ENCODE measurements at regions of chr19 and their contacts with region 1.

Region 1: GRCh38 chr19:10416380-10417257 is 3.7 kb upstream of the PDE4A start:
- DNase-seq: peak; percentile 69 to 95
- ATAC-seq: peak; percentile 54 to 67
- H3K4me3 ChIP-seq: peak overlapping the region; percentile 63
- H3K27ac ChIP-seq: peak overlapping the region; percentile 71 to 87
- H3K4me1 ChIP-seq: peaks cover 24% of the 10 kb centered on the region
- CTCF ChIP-seq: peak; percentile 87
- EP300 ChIP-seq: no peak
- POLR2A ChIP-seq: no peak
- RAD21 ChIP-seq: peak in 1 of 2 experiments; percentile 14; a peak in 1 of 5 replicates

Region 2: GRCh38 chr19:10316229-10317044 is 100.2 kb before region 1 on chr19:
- CTCF ChIA-PET with region 1: no interaction called
- POLR2A ChIA-PET with region 1: no interaction called
- DNase-seq: no peak
- ATAC-seq: peak; percentile 32 to 40; a peak in 5 of 6 replicates
- H3K4me3 ChIP-seq: peak overlapping the region; percentile 73
- H3K27ac ChIP-seq: peak overlapping the region; percentile 87 to 95
- H3K4me1 ChIP-seq: peaks cover 12% of the 10 kb centered on the region
- CTCF ChIP-seq: no peak
- EP300 ChIP-seq: no peak
- POLR2A ChIP-seq: no peak
- RAD21 ChIP-seq: no peak

Region 3: DNA sequence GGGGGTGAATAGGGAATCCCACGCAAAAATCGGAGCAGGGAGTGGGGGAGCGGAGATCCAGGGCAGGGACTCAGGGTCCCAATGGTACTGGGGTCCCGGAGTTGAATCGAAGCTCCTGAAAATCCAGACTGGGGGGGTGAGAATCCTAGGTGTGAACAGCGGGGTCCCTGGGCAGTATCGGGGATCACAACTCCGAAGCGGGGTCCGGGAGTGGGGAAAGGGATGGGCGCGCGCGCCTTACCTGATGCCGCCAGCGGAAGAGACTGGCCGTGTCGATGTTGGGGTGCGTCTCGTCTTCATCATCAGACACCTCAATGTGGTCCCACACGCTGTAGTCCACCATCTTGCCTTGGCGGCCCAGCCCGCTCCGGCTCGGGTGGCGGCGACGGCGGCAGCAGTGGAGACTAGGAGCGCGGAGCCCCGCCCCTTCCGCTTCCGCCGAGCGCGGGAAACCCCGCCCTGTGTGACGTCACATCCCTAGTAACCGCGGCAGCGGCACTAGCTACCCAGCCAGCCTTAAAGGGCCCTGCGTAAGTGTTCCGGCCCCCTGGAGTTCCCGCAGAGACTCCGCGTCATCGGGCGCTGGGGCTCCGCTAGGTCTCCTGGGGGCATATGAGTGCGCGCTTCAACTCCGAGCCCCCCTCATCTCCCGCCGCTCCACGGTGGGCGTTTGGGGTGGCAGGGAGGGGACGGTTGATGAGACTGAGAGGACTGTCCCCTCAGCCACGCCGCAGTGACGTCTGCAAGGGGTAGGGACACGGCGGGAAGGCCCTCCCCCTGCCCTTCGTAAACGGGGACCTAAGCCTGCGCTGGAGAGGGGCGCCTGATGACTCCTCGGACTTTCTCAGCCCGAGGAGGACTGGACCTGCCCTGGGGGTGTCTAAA is 13.2 kb before region 1 on chr19 and contains the start of gene CDC37:
- CTCF ChIA-PET with region 1: interaction called, 172 read pairs
- POLR2A ChIA-PET with region 1: interaction called, 4 read pairs
- DNase-seq: peak; percentile 93 to 95
- ATAC-seq: peak; percentile 87 to 89
- H3K4me3 ChIP-seq: peak within 1 kb of the TSS; percentile 94
- H3K27ac ChIP-seq: peak within 1 kb of the TSS; percentile 82 to 94
- H3K4me1 ChIP-seq: peaks cover 23% of the 10 kb centered on the region
- CTCF ChIP-seq: no peak
- EP300 ChIP-seq: no peak
- POLR2A ChIP-seq: peak; percentile 89
- RAD21 ChIP-seq: no peak
- polyA plus RNA-seq, gene CDC37: 125 and 152 TPM in 2 replicates

Region 4: GRCh38 chr19:10486538-10486937 is 69.9 kb after region 1 on chr19:
- CTCF ChIA-PET with region 1: no interaction called
- POLR2A ChIA-PET with region 1: no interaction called
- DNase-seq: no peak
- ATAC-seq: no peak
- H3K4me3 ChIP-seq: no peak overlapping the region
- H3K27ac ChIP-seq: no peak overlapping the region
- H3K4me1 ChIP-seq: no peaks in the 10 kb centered on the region
- CTCF ChIP-seq: no peak
- EP300 ChIP-seq: no peak
- POLR2A ChIP-seq: no peak
- RAD21 ChIP-seq: no peak

Measured in A549 (cell line).